GM12878 (cell line): ENCODE measurements at regions of chr6 and their contacts with region 1.

Region 1: GRCh38 chr6:141988954-141989705 is 143.6 kb upstream of the GJE1 start:
- DNase-seq: no peak
- ATAC-seq: peak; percentile 78
- H3K4me3 ChIP-seq: no peak overlapping the region
- H3K27ac ChIP-seq: no peak overlapping the region
- H3K4me1 ChIP-seq: no peaks in the 10 kb centered on the region
- H3K27me3 ChIP-seq: no peaks in the 10 kb centered on the region
- CTCF ChIP-seq: peak; percentile 61 to 69 (median 67)
- EP300 ChIP-seq: no peak
- POLR2A ChIP-seq: no peak
- RAD21 ChIP-seq: peak; percentile 63

Region 2: DNA sequence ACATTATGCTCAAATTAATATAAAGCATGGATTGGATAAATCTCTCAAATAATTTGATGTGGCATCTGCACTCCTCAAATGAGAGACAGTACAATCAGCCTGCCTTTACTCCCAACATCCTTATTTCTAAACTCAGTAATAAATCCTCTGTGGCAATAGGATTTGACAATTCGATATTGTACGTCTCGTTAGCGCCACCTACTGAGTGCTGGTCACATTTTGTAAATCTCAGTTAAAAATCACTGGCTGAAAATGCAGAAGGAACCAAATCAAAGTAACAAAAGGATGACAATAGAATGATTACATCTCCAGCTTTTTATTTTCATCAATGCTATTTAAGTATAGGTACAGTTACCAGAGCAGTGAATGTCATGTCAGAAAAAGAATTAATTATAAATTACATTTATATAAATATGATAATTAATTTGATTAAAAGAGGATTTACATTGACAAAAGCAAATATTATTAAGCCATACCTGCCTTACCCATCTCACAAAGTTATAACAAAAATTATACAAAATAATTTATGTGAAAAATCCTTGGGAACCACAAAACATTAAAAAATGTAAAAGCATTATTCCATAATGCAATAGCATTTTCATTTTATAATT is 123.4 kb after region 1 on chr6:
- CTCF ChIA-PET with region 1: interaction called, 40 read pairs
- POLR2A ChIA-PET with region 1: no interaction called
- RAD21 ChIA-PET with region 1: interaction called, 11 read pairs
- SMC1A ChIA-PET with region 1: interaction called, 17 read pairs
- in situ Hi-C with region 1: loop called (anchors 5 kb)
- intact Hi-C with region 1: loop called (anchors 1 kb)
- DNase-seq: peak; percentile 4
- ATAC-seq: peak; percentile 61
- H3K4me3 ChIP-seq: no peak overlapping the region
- H3K27ac ChIP-seq: no peak overlapping the region
- H3K4me1 ChIP-seq: no peaks in the 10 kb centered on the region
- H3K27me3 ChIP-seq: no peaks in the 10 kb centered on the region
- CTCF ChIP-seq: peak; percentile 73 to 85 (median 75)
- EP300 ChIP-seq: no peak
- POLR2A ChIP-seq: no peak
- RAD21 ChIP-seq: peak; percentile 86

Region 3: DNA sequence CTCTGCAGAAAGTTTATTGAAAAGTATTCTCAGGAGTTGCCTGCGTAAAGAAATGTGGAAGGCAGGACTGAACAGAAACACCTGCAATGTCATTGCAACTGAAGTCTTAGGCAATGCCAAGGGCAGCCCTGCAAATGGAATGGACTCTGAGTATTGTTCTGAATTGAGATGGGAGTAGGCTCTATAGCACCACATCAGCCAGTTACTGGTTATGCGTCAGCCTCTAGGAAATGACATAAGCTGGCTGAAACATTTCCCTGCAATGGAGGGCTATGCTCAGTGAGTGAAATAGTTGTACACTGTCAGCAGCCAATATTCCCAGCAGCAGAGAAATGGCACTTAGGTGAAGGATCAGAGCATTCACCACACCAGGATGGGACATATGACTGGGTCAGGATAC is 129.8 kb after region 1 on chr6:
- CTCF ChIA-PET with region 1: interaction called, 40 read pairs
- POLR2A ChIA-PET with region 1: no interaction called
- RAD21 ChIA-PET with region 1: no interaction called
- SMC1A ChIA-PET with region 1: interaction called, 17 read pairs
- in situ Hi-C with region 1: loop called (anchors 5 kb)
- intact Hi-C with region 1: no loop called
- DNase-seq: no peak
- ATAC-seq: no peak
- H3K4me3 ChIP-seq: no peak overlapping the region
- H3K27ac ChIP-seq: no peak overlapping the region
- H3K4me1 ChIP-seq: no peaks in the 10 kb centered on the region
- H3K27me3 ChIP-seq: no peaks in the 10 kb centered on the region
- CTCF ChIP-seq: no peak
- EP300 ChIP-seq: no peak
- POLR2A ChIP-seq: no peak
- RAD21 ChIP-seq: no peak